ENCODE measurements at regions of chr2 and their contacts with region 1.

Region 1: DNA sequence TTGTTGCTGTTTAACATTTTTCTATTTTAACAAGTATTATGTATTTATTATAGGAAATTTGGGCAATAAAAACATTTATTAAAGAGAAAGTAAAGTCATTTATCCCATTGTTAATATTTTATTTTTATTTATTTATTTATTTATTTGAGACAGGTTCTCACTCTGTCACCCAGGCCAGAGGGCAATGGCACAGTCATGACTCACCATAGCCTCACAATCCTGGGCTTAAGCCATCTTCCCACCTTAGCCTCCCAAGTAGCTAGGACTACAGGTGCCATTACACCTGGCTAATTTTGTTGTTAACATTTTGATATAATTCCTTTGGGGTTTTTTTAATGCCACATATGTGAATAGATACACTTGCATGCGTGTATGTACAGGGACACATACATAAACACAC is 165.9 kb upstream of the STON1 start:
- DNase-seq: peak in 1 of 2 experiments; percentile 43
- H3K4me3 ChIP-seq: no peak overlapping the region
- H3K27ac ChIP-seq: no peak overlapping the region
- H3K4me1 ChIP-seq: no peaks in the 10 kb centered on the region
- H3K27me3 ChIP-seq: no peaks in the 10 kb centered on the region
- CTCF ChIP-seq: no peak

Region 2: GRCh38 chr2:48398285-48399002 is 34.3 kb after region 1 on chr2:
- CTCF ChIA-PET with region 1: no interaction called
- POLR2A ChIA-PET with region 1: no interaction called
- intact Hi-C with region 1: no loop called
- DNase-seq: no peak
- H3K4me3 ChIP-seq: no peak overlapping the region
- H3K27ac ChIP-seq: no peak overlapping the region
- H3K4me1 ChIP-seq: no peaks in the 10 kb centered on the region
- H3K27me3 ChIP-seq: no peaks in the 10 kb centered on the region
- CTCF ChIP-seq: no peak

Region 3: GRCh38 chr2:48530033-48530804 is 166.1 kb after region 1 on chr2 and contains the start of gene STON1:
- CTCF ChIA-PET with region 1: no interaction called
- POLR2A ChIA-PET with region 1: no interaction called
- intact Hi-C with region 1: no loop called
- DNase-seq: peak in 1 of 2 experiments; percentile 31
- H3K4me3 ChIP-seq: peak within 1 kb of the TSS; percentile 53; the same call in 1 of the 2 replicates
- H3K27ac ChIP-seq: no peak within 1 kb of the TSS
- H3K4me1 ChIP-seq: no peaks in the 10 kb centered on the region
- H3K27me3 ChIP-seq: no peaks in the 10 kb centered on the region
- CTCF ChIP-seq: no peak
- total RNA-seq, gene STON1: 1.4 and 1.7 TPM in 2 replicates

Region 4: GRCh38 chr2:48799601-48800000 is 435.5 kb after region 1 on chr2:
- CTCF ChIA-PET with region 1: no interaction called
- POLR2A ChIA-PET with region 1: interaction called, 13 read pairs
- intact Hi-C with region 1: no loop called
- DNase-seq: no peak
- H3K4me3 ChIP-seq: no peak overlapping the region
- H3K27ac ChIP-seq: no peak overlapping the region
- H3K4me1 ChIP-seq: no peaks in the 10 kb centered on the region
- H3K27me3 ChIP-seq: peaks cover 5% of the 10 kb centered on the region; the same call in 1 of the 2 replicates
- CTCF ChIP-seq: no peak

Measured in PC-9 (cell line).